ENCODE measurements at regions of chr13 and their contacts with region 1.

Region 1: DNA sequence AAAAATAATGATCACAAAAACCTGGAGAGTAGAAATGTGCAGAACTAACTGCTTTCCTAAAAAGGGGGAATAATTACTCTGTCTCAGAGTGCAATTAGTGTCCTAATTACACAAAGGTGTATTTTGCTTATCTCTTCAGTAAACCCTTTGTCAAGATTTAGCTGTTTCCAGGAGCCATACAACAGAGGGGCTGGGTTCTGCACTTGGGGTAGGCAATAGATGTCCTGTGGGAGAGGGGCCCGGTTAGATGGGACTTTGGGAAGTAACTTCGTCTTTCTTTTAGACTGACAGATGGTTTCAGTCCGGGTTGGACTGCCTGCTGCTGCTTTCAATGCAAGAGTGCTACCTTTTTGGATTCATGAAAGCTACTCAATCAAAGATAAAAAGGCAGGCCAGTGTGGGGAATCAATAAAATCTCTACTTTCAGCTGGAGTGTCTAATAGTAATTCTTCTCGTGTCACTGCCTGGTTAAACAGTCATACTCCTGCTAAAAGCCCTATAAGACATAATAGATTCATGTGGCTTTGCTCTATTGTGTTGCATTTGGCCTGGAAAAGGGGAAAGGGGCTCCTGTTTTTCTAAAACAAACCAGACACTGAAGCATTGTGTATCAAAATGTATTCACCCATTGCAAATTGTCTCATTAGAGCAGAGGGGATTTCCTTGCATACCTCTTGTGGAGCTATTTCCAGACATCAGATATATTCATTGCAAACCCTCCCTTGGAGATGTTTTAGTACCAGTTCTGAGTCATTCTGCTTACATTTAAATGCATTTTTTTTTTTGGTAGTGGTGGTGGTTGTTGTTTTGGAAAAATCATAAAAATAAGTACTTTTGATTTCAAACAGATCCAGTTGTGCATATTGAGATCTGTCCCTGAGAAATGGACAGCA is 83.3 kb upstream of the PCDH8 start:
- DNase-seq: no peak

Region 2: DNA sequence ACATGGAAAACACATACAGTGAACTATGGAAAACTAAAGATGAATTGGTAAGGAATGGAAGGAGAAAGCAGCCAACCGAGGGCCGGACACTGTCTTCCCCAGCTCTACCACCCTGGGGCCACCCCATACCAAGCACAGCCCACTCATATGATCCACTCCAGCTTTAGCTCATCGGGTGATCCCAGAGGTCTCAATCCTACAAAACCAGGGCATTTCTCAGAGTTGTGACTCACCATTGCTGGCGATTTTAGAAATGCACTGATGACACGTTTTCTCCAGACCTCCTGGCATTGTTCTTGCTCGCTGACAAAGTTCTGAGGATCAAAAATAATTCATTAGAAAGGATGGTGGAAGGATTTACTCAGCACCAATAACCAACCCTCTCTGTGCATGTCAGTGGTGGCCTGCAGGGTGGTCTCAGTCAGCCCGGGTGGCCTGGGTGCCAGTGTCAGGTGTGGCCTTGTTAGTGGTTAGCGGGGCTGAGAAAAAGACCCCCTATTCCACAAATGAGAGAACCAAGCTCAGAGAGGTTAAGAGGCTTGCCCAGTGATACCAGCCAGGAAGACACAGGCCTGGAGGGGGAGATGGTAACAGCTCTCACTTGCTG is 1093.4 kb before region 1 on chr13:
- intact Hi-C with region 1: loop called in 1 of 2 experiments (anchors 5 kb)
- DNase-seq: no peak

Measured in posterior vena cava (tissue), 2 donors.